Panc1 (cell line): ENCODE measurements at regions of chr10 and their contacts with region 1.

Region 1: DNA sequence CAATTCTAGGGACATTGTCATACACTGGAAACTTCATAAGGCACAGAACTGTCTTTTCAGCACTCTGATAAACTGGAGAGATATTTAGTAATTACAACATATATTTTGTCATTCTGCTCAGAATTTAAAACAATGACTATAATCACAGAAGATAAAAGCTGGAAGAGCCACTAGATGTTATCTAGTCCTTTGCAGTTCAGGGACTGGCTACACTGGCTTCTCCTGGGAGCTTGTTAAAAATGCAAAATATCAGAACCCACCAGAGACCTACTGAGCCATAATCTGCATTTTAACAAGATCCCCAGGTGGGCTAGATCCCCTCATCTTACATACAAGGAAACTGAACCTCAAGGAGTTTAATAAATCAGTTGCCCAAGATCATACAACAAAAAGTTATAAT is 32.3 kb downstream of the IDE start:
- DNase-seq: no peak
- ATAC-seq: no peak
- H3K4me3 ChIP-seq: no peak overlapping the region
- H3K27ac ChIP-seq: no peak overlapping the region
- H3K4me1 ChIP-seq: peaks cover 8% of the 10 kb centered on the region
- H3K27me3 ChIP-seq: no peaks in the 10 kb centered on the region
- CTCF ChIP-seq: no peak

Region 2: GRCh38 chr10:92552310-92552709 is 10.7 kb after region 1 on chr10:
- CTCF ChIA-PET with region 1: no interaction called
- POLR2A ChIA-PET with region 1: interaction called, 12 read pairs
- in situ Hi-C with region 1: no loop called
- intact Hi-C with region 1: no loop called
- DNase-seq: no peak
- ATAC-seq: no peak
- H3K4me3 ChIP-seq: no peak overlapping the region
- H3K27ac ChIP-seq: no peak overlapping the region
- H3K4me1 ChIP-seq: no peaks in the 10 kb centered on the region
- H3K27me3 ChIP-seq: no peaks in the 10 kb centered on the region
- CTCF ChIP-seq: no peak